ENCODE measurements at regions of chr20 and their contacts with region 1.

Region 1: GRCh38 chr20:57346477-57346876 is 4.6 kb upstream of the RAE1 start:
- DNase-seq: peak; percentile 51
- ATAC-seq: peak; percentile 71; the same call in 1 of the 2 replicates
- H3K4me3 ChIP-seq: no peak overlapping the region
- H3K27ac ChIP-seq: no peak overlapping the region
- H3K4me1 ChIP-seq: no peaks in the 10 kb centered on the region
- H3K27me3 ChIP-seq: peaks cover under 1% of the 10 kb centered on the region
- CTCF ChIP-seq: peak; percentile 78

Region 2: GRCh38 chr20:57089691-57090150 is 256.8 kb before region 1 on chr20:
- CTCF ChIA-PET with region 1: interaction called, 10 read pairs
- POLR2A ChIA-PET with region 1: no interaction called
- in situ Hi-C with region 1: no loop called
- intact Hi-C with region 1: loop called (anchors 1 kb)
- DNase-seq: peak; percentile 33
- ATAC-seq: peak; percentile 95
- H3K4me3 ChIP-seq: no peak overlapping the region
- H3K27ac ChIP-seq: no peak overlapping the region
- H3K4me1 ChIP-seq: no peaks in the 10 kb centered on the region; the same call in 1 of the 2 replicates
- H3K27me3 ChIP-seq: no peaks in the 10 kb centered on the region
- CTCF ChIP-seq: peak; percentile 98

Region 3: GRCh38 chr20:57298412-57298811 is 48.1 kb before region 1 on chr20:
- CTCF ChIA-PET with region 1: no interaction called
- POLR2A ChIA-PET with region 1: no interaction called
- in situ Hi-C with region 1: no loop called
- intact Hi-C with region 1: no loop called
- DNase-seq: no peak
- ATAC-seq: no peak
- H3K4me3 ChIP-seq: no peak overlapping the region
- H3K27ac ChIP-seq: no peak overlapping the region
- H3K4me1 ChIP-seq: no peaks in the 10 kb centered on the region
- H3K27me3 ChIP-seq: no peaks in the 10 kb centered on the region
- CTCF ChIP-seq: no peak

Region 4: GRCh38 chr20:57308813-57309271 is 37.6 kb before region 1 on chr20:
- CTCF ChIA-PET with region 1: no interaction called
- POLR2A ChIA-PET with region 1: no interaction called
- in situ Hi-C with region 1: no loop called
- intact Hi-C with region 1: no loop called
- DNase-seq: no peak
- ATAC-seq: no peak
- H3K4me3 ChIP-seq: no peak overlapping the region
- H3K27ac ChIP-seq: no peak overlapping the region
- H3K4me1 ChIP-seq: no peaks in the 10 kb centered on the region
- H3K27me3 ChIP-seq: peaks cover 14% of the 10 kb centered on the region
- CTCF ChIP-seq: no peak

Measured in Panc1 (cell line).